ENCODE measurements at regions of chr1 and their contacts with region 1.

Region 1: DNA sequence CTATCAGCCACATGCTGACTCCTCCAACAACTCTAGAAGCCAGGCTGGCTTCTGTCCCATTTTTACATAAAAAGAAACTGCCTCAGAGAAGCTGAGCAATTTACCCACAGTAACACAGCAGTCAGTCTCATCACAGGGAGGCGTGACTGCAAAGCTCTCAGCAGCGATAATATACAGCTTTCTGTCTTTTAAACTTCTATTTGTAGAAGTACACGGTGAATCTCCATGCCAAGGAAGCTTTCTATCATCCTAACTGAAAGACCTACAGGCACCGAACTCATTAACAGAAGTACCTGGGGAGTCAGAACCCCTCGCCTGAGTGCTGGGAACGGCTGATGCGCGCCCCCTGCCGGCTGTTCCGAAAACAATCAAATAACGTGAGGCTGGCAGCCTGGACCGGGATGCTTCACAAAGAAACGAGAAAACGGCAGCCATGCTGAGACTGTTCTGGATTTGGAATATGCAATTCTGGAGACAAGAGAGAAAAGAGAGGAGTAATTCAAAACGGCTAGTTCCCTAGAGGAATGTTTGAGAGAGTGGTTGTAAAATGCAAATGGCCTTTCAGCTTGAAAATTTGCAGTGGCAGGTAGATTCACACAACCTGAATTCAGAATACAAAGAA is 43.5 kb upstream of the RAB4A start:
- DNase-seq: peak; percentile 71 to 86 (median 71)
- H3K4me3 ChIP-seq: no peak overlapping the region
- H3K4me3 Mint-ChIP-seq: no peak overlapping the region
- H3K27ac ChIP-seq: no peak overlapping the region
- H3K27ac Mint-ChIP-seq: peak overlapping the region in 2 of 8 donors; percentile 12 to 68
- H3K4me1 ChIP-seq: peaks cover 13% of the 10 kb centered on the region
- H3K4me1 Mint-ChIP-seq: peaks cover 7 to 17% (median 8%) of the 10 kb centered on the region in 3 donors
- H3K27me3 ChIP-seq: no peaks in the 10 kb centered on the region
- H3K27me3 Mint-ChIP-seq: peaks cover 6 to 21% of the 10 kb centered on the region in 2 donors

Region 2: GRCh38 chr1:228691926-228692325 is 535.5 kb before region 1 on chr1:
- CTCF ChIA-PET with region 1: interaction called, 32 read pairs
- POLR2A ChIA-PET with region 1: no interaction called
- DNase-seq: peak in 2 of 5 donors; percentile 21 to 28
- H3K4me3 ChIP-seq: no peak overlapping the region
- H3K4me3 Mint-ChIP-seq: no peak overlapping the region
- H3K27ac ChIP-seq: no peak overlapping the region
- H3K27ac Mint-ChIP-seq: no peak overlapping the region
- H3K4me1 ChIP-seq: peaks cover 9% of the 10 kb centered on the region
- H3K4me1 Mint-ChIP-seq: peaks cover 7 to 10% (median 9%) of the 10 kb centered on the region in 3 donors
- H3K27me3 ChIP-seq: no peaks in the 10 kb centered on the region
- H3K27me3 Mint-ChIP-seq: peaks cover 5 to 9% of the 10 kb centered on the region in 2 donors

Region 3: DNA sequence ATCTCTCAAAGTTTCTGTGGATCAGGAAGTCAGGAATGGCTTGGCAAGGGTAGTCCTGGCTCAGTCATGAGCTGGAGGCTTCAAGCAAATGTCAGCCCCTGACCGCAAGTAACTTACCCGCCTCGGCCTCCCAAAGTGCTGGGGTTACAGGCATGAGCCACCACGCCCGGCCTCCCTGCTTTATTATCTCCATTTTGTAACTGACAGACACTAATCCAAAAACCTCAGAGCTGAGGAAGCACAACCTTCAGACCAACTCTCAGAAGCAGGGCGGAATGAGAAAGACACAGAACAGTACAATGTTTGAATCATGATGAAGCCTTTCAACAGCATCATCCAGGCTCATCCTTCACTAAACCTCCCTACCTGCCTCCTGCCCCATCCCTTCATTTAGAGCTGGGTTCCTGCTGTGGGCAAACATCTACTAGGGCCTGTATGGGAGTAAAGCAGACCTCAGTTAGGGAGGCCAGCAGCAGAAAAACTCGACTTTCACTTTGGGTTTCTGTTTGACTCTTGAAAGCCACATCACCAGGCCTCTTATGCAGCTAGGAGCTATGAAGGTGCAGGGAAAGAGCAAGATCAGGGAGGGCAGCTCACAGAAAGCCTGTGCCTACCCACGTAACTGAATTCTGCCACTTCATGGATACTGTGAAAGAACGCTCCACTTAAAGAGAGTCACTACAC is 40.9 kb before region 1 on chr1:
- CTCF ChIA-PET with region 1: interaction called, 10 read pairs
- POLR2A ChIA-PET with region 1: no interaction called
- DNase-seq: no peak
- H3K4me3 ChIP-seq: no peak overlapping the region
- H3K4me3 Mint-ChIP-seq: peak overlapping the region in 3 of 7 donors; percentile 29 to 52 (median 30)
- H3K27ac ChIP-seq: no peak overlapping the region
- H3K27ac Mint-ChIP-seq: peak overlapping the region in 5 of 8 donors; percentile 14 to 83 (median 54)
- H3K4me1 ChIP-seq: peaks cover 6% of the 10 kb centered on the region
- H3K4me1 Mint-ChIP-seq: peaks cover 13 to 21% (median 20%) of the 10 kb centered on the region in 3 donors
- H3K27me3 ChIP-seq: no peaks in the 10 kb centered on the region
- H3K27me3 Mint-ChIP-seq: no peaks in the 10 kb centered on the region

Region 4: DNA sequence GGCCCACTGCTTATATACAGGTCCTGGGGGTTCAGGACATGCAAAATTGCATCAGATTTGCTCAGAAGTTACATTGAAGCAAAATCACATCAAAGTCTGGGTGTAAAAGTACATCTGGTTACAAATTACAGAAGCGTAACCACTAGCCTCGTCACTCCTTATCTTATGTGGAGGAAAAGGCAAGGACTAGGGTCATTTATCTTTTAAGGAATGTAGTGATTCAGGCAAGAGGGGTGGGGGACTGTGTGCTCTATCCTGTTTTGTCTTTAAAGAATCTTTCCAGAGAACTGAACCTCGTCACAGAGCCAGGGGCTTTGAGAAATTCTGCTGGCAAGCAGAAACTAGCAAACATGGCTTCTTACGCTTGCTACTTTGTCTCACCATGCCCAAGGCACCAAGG is 17.6 kb before region 1 on chr1:
- CTCF ChIA-PET with region 1: interaction called, 11 read pairs
- POLR2A ChIA-PET with region 1: no interaction called
- DNase-seq: no peak
- H3K4me3 ChIP-seq: no peak overlapping the region
- H3K4me3 Mint-ChIP-seq: no peak overlapping the region
- H3K27ac ChIP-seq: no peak overlapping the region
- H3K27ac Mint-ChIP-seq: no peak overlapping the region
- H3K4me1 ChIP-seq: peaks cover 11% of the 10 kb centered on the region
- H3K4me1 Mint-ChIP-seq: peaks cover 0 to 4% (median 3%) of the 10 kb centered on the region in 3 donors
- H3K27me3 ChIP-seq: no peaks in the 10 kb centered on the region
- H3K27me3 Mint-ChIP-seq: peaks cover 0 to 2% of the 10 kb centered on the region in 2 donors

Region 5: DNA sequence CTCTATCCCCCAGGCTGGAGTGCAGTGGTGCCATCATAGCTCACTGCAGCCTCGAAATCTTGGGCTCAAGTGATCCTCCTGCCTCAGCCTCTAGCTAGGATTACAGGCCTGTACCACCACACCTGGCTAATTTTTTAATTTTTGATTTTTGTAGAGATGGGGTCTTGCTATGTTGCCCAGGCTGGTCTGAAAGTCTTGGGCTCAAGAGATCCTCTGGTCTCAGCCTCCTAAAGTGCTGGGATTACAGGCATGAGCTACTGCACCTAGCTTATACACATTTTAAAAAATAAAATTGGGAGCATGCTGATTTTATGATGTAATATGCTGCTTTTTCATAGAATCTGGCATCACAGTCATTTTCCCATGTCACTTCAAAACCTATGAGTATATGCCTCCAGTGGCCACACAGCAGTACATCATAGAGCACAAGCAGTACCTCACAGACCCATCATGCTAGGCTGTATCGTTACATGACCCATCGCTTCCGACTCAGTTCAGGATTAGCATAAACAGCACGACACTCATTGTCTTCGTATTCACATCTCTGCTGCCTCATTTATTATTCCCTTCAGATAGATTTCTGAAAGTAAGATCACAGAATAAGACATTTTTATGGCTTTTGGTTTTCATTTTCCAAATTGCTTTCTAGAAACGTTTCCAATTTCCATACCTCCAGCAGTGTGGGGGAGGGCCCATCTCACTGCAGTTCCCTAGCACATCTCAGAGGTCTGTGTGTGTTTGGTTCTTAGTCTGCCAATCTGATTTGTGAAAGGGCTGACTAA is 151.4 kb after region 1 on chr1:
- CTCF ChIA-PET with region 1: no interaction called
- POLR2A ChIA-PET with region 1: no interaction called
- DNase-seq: no peak
- H3K4me3 ChIP-seq: no peak overlapping the region
- H3K4me3 Mint-ChIP-seq: no peak overlapping the region
- H3K27ac ChIP-seq: no peak overlapping the region
- H3K27ac Mint-ChIP-seq: no peak overlapping the region
- H3K4me1 ChIP-seq: no peaks in the 10 kb centered on the region
- H3K4me1 Mint-ChIP-seq: no peaks in the 10 kb centered on the region
- H3K27me3 ChIP-seq: no peaks in the 10 kb centered on the region
- H3K27me3 Mint-ChIP-seq: peaks cover 2 to 12% of the 10 kb centered on the region in 2 donors

Measured in CD8-positive, alpha-beta memory T cell (primary cell).